Activated B cell treated with CpG ODN at 0.5 μM for 24 hours (primary cell): ENCODE measurements at regions of chr14 and their contacts with region 1.

Region 1: GRCh38 chr14:75258615-75259466 is 19.8 kb upstream of the FOS start:
- DNase-seq: peak; percentile 99
- ATAC-seq: peak; percentile 86
- H3K4me3 Mint-ChIP-seq: peak overlapping the region; percentile 95
- H3K27ac Mint-ChIP-seq: peak overlapping the region; percentile 100
- H3K4me1 Mint-ChIP-seq: peaks cover 24% of the 10 kb centered on the region
- H3K27me3 Mint-ChIP-seq: peaks cover 4% of the 10 kb centered on the region
- CTCF ChIP-seq: no peak

Region 2: DNA sequence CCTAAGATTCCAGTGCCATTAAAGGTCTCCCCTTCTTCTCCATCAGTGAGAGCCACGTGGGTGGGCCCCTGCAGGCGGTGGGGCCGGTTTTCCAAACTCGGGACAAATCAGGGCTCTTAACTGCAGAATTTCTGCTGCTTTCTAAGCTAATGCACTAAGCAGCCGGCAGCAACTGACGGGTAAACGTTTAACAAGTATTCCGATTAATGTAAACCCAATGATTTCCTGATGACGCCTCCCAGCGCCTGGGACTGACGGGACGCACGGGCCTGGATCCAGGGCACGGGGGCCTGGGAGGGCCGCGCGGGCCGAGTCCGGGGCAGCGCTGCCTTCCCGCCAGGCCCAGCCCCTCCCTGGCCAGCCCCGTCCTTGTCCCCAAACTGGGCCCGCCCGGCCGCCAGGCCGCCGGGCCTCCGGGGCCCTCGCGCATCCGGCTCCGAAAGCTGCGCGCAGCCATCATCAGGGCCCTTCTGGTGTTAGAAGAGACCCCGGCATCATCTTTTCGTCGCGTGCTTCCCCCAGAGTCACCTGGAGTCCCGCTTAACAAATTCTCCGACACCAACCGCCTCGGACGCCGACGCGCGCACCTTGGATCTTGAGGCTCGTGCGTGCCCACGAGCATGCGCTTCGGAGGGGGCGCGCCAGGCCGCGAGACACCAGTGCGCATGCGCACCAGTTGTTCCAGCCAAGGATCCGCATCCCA is 207.8 kb before region 1 on chr14 and contains the start of gene MLH3:
- CTCF ChIA-PET with region 1: no interaction called
- POLR2A ChIA-PET with region 1: no interaction called
- intact Hi-C with region 1: no loop called
- DNase-seq: peak; percentile 75
- ATAC-seq: peak; percentile 80
- H3K4me3 Mint-ChIP-seq: peak within 1 kb of the TSS; percentile 92
- H3K27ac Mint-ChIP-seq: peak within 1 kb of the TSS; percentile 83
- H3K4me1 Mint-ChIP-seq: peaks cover 19% of the 10 kb centered on the region
- H3K27me3 Mint-ChIP-seq: no peaks in the 10 kb centered on the region
- CTCF ChIP-seq: no peak
- total RNA-seq, gene MLH3: 20.0 and 21.7 TPM in 2 replicates

Region 3: DNA sequence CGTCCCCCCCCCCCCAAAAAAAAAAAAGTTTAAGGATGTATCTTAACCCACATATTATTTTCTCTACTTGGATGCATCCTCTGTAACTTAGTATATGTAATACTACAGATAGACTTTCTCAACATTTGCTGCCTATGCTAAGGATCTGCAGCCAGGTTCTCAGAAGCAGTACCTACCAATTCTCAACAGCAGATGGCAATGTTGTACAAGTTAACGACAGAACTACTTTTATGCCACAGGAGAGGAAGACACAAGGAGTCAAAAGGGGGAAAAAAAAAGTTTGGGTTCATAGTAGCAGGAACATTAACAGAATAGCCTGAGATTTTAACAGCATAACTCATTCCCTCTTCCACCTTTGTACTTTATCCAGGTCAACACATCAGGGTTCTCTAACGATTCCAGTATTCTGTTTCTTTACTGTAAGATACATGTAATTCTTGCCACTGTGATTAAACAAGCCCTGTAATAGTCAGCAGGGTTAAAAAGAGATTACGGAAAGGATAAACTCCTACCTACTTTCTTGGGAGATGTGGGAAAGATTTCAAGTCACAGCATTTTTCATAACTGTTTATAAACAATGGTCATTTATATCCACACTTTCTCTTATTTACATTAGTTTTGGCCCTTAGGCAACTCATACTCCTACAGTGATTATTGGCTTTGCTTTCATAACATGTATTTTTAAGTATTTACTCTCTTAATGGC is 126.3 kb before region 1 on chr14:
- CTCF ChIA-PET with region 1: no interaction called
- POLR2A ChIA-PET with region 1: interaction called, 3 read pairs
- intact Hi-C with region 1: loop called (anchors 2 kb)
- DNase-seq: no peak
- ATAC-seq: peak; percentile 87
- H3K4me3 Mint-ChIP-seq: no peak overlapping the region
- H3K27ac Mint-ChIP-seq: no peak overlapping the region
- H3K4me1 Mint-ChIP-seq: peaks cover 16% of the 10 kb centered on the region
- H3K27me3 Mint-ChIP-seq: no peaks in the 10 kb centered on the region
- CTCF ChIP-seq: peak; percentile 51

Region 4: DNA sequence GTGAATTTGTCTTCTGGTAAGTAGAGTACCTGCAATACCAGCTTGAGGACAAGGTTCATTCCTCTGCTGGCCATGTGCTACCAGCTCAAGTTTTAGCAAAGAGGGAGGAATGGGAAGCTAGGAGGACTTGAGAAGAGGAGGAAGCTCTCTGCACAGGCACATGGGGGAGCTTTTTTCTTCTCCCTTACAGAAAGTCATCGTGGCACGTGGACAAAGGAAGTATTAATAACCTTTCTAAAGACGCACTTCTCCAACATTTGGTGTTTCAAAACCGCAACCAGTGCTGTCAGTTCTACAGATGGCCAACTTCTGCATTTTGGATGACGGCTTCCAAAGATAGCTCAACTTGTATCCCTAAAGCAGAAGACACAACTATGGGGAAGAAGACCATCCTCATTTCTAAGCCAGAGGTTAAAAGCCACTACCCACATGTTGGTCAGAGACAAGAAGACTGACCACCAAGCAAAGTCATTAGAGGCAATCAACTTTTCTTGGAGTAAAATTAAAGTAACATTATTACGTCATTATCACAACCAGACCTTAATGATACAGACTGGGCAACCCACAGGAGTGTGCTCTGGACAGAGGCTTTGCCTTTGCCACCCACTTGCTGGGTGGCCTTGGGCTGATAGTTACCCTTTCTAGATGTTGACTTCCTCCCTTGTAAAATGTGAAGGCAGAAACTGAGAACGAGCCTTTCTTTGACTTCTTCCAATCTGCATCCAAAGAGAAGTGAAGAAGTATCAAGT is 70.1 kb before region 1 on chr14:
- CTCF ChIA-PET with region 1: interaction called, 3 read pairs
- POLR2A ChIA-PET with region 1: no interaction called
- intact Hi-C with region 1: loop called (anchors 1 kb)
- DNase-seq: no peak
- ATAC-seq: peak; percentile 88
- H3K4me3 Mint-ChIP-seq: peak overlapping the region; percentile 47
- H3K27ac Mint-ChIP-seq: peak overlapping the region; percentile 68
- H3K4me1 Mint-ChIP-seq: peaks cover 25% of the 10 kb centered on the region
- H3K27me3 Mint-ChIP-seq: no peaks in the 10 kb centered on the region
- CTCF ChIP-seq: no peak

Region 5: DNA sequence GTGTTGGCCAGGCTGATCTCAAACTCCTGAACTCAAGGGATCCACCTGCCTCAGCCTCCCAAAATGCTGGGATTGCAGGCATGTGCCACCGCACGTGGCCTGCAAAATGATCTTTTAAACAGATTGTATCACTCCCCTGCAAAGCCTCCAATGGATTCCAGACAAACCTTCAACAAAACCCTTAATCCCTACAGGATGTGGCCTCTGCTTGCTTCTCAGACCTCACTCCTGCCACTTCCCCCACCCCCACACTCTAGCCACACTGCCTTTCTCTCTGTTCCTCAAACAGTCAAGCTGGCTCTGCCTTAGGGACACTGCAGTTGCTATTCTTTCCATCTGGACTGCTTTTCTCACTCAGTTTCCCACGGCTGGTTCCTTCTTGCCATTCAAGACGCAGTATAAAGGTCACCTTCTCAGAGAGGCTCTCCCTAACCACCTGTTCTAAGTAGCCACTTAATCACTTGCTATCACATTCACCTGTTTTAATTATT is 35.1 kb before region 1 on chr14:
- CTCF ChIA-PET with region 1: interaction called, 4 read pairs
- POLR2A ChIA-PET with region 1: interaction called, 4 read pairs
- intact Hi-C with region 1: loop called (anchors 5 kb)
- DNase-seq: no peak
- ATAC-seq: peak; percentile 55
- H3K4me3 Mint-ChIP-seq: peak overlapping the region; percentile 50
- H3K27ac Mint-ChIP-seq: peak overlapping the region; percentile 36
- H3K4me1 Mint-ChIP-seq: peaks cover 43% of the 10 kb centered on the region
- H3K27me3 Mint-ChIP-seq: no peaks in the 10 kb centered on the region
- CTCF ChIP-seq: no peak

Region 6: DNA sequence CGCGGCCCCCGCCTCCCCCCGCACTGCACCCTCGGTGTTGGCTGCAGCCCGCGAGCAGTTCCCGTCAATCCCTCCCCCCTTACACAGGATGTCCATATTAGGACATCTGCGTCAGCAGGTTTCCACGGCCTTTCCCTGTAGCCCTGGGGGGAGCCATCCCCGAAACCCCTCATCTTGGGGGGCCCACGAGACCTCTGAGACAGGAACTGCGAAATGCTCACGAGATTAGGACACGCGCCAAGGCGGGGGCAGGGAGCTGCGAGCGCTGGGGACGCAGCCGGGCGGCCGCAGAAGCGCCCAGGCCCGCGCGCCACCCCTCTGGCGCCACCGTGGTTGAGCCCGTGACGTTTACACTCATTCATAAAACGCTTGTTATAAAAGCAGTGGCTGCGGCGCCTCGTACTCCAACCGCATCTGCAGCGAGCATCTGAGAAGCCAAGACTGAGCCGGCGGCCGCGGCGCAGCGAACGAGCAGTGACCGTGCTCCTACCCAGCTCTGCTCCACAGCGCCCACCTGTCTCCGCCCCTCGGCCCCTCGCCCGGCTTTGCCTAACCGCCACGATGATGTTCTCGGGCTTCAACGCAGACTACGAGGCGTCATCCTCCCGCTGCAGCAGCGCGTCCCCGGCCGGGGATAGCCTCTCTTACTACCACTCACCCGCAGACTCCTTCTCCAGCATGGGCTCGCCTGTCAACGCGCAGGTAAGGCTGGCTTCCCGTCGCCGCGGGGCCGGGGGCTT is 19.8 kb after region 1 on chr14 and contains the start of gene FOS:
- CTCF ChIA-PET with region 1: no interaction called
- POLR2A ChIA-PET with region 1: interaction called, 22 read pairs
- intact Hi-C with region 1: loop called (anchors 1 kb)
- DNase-seq: peak; percentile 88
- ATAC-seq: peak; percentile 70
- H3K4me3 Mint-ChIP-seq: peak within 1 kb of the TSS; percentile 94
- H3K27ac Mint-ChIP-seq: peak within 1 kb of the TSS; percentile 94
- H3K4me1 Mint-ChIP-seq: peaks cover 64% of the 10 kb centered on the region
- H3K27me3 Mint-ChIP-seq: peaks cover 18% of the 10 kb centered on the region
- CTCF ChIP-seq: no peak
- total RNA-seq, gene FOS: 27.1 and 37.8 TPM in 2 replicates